Mammary epithelial cell (primary cell): ENCODE measurements at regions of chr22 and their contacts with region 1.

Region 1: GRCh38 chr22:43666457-43666856 is 145.6 kb downstream of the EFCAB6 start:
- DNase-seq: no peak
- H3K4me3 ChIP-seq: no peak overlapping the region
- H3K27ac ChIP-seq: no peak overlapping the region
- H3K4me1 ChIP-seq: no peaks in the 10 kb centered on the region
- H3K27me3 ChIP-seq: peaks cover 6% of the 10 kb centered on the region
- CTCF ChIP-seq: no peak

Region 2: DNA sequence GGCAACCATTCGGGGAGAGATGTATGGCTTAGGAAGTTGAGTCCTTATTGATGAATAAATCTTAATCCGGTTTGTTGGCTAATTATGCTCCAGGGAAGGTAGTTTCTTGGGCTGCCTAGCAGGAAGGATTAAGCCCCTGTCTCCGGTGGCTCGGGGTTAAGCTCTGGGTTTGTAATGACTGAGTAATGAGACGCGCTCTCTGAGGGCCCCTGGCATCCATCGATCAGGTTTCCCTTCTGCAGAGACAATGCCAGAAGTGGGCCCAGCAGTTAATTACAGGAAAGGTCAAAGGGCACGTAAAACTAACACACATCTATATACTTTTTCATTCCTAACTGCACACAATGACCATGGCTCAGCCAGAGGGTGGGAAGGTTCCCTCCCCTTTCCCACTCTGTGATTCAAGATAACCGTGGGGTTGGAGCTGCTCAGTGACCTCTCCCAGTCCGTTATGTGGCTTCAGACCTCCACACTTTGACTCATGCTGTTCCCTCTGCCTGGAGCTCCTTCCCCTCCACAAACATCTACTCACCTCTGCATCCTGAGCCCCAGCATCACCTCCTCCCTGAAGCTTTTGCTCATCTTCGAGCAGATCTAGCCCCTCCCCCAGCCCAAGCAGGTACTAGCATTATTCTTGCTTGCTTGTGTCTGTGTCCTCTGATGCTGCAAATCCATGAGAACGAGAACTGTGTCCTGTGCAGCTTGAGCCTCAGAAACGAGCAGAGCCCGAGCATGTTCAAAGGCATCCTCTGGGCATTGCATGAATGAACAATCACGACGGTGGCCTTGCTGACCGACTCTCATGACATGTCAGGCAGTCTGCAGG is 339.9 kb before region 1 on chr22:
- CTCF ChIA-PET with region 1: interaction called, 23 read pairs
- dilution Hi-C with region 1: no loop called
- in situ Hi-C with region 1: no loop called
- intact Hi-C with region 1: no loop called
- DNase-seq: no peak
- H3K4me3 ChIP-seq: no peak overlapping the region
- H3K27ac ChIP-seq: no peak overlapping the region
- H3K4me1 ChIP-seq: no peaks in the 10 kb centered on the region
- H3K27me3 ChIP-seq: peaks cover 6% of the 10 kb centered on the region
- CTCF ChIP-seq: no peak

Region 3: GRCh38 chr22:43636086-43636485 is 30.4 kb before region 1 on chr22:
- CTCF ChIA-PET with region 1: no interaction called
- dilution Hi-C with region 1: no loop called
- in situ Hi-C with region 1: no loop called
- intact Hi-C with region 1: no loop called
- DNase-seq: no peak
- H3K4me3 ChIP-seq: no peak overlapping the region
- H3K27ac ChIP-seq: no peak overlapping the region
- H3K4me1 ChIP-seq: no peaks in the 10 kb centered on the region
- H3K27me3 ChIP-seq: no peaks in the 10 kb centered on the region
- CTCF ChIP-seq: no peak

Region 4: DNA sequence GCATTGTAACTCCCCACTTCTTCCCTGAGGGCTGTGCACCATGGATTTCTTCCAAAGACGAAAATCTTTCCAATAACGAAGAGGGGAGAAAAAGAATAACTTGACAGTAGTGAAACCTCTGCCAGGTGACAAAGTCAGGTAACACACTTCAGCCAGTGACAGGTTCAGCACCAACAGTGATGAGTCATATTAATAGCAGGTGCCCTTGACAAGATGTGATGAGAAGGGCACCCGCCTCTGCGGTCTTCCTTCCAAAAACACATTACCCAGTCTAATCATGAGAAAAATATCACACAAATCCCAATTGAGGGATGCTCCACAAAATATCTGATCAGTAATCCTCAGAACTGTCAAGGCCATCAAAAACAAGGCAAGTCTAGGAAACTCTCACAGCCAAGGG is 12.2 kb before region 1 on chr22:
- CTCF ChIA-PET with region 1: no interaction called
- dilution Hi-C with region 1: no loop called
- in situ Hi-C with region 1: no loop called
- intact Hi-C with region 1: no loop called
- DNase-seq: no peak
- H3K4me3 ChIP-seq: no peak overlapping the region
- H3K27ac ChIP-seq: no peak overlapping the region
- H3K4me1 ChIP-seq: no peaks in the 10 kb centered on the region
- H3K27me3 ChIP-seq: peaks cover 3% of the 10 kb centered on the region
- CTCF ChIP-seq: no peak